Mammary epithelial cell (primary cell): ENCODE measurements at regions of chr6 and their contacts with region 1.

Region 1: GRCh38 chr6:32589598-32590449 is at the start of gene HLA-DRB1:
- DNase-seq: peak; percentile 16
- H3K4me3 ChIP-seq: no peak within 1 kb of the TSS
- H3K27ac ChIP-seq: no peak within 1 kb of the TSS
- H3K4me1 ChIP-seq: no peaks in the 10 kb centered on the region
- H3K27me3 ChIP-seq: no peaks in the 10 kb centered on the region
- CTCF ChIP-seq: no peak
- total RNA-seq, gene HLA-DRB1: 0.24 to 0.83 TPM

Region 2: DNA sequence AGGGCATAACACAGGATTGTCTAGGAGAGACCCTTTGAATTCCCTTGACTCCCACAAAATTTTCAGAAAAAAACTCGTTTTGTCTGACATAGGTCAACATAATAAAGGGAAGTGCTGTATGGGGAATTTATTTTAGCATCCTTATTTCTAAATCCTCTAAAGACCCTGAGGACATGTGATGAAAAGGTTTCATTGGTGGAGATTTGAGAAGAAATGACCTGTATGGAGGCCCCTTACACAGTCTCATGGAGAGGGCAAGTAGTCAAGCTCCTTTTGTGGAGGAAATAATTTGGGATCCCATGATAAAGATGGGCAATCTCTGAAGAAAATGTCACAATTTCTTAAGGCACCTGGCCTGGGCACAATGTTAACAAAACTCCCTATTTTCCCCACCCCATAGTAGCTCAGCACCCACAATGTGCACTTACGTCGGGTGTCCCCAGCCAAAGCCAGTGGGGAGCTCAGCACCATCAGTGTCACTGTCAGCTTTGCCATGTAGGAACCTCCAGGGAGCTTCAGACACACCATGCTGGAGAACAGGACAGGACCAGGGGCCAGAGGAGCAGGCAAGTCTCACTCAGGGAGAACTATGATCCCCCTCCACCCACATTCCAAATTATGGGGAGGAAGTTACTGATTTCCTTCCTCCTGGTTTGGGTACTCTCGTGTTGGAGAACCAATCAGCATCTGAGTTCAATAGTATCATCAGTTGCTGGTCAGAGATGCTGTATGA is 60.0 kb before region 1 on chr6 and contains the start of gene HLA-DRB5:
- CTCF ChIA-PET with region 1: no interaction called
- dilution Hi-C with region 1: loop called (anchors 10 kb)
- in situ Hi-C with region 1: loop called in 1 of 2 experiments (anchors 10 kb)
- intact Hi-C with region 1: loop called (anchors 2 kb)
- DNase-seq: no peak
- H3K4me3 ChIP-seq: no peak within 1 kb of the TSS
- H3K27ac ChIP-seq: no peak within 1 kb of the TSS
- H3K4me1 ChIP-seq: no peaks in the 10 kb centered on the region
- H3K27me3 ChIP-seq: no peaks in the 10 kb centered on the region
- CTCF ChIP-seq: no peak
- total RNA-seq, gene HLA-DRB5: not detected